ENCODE measurements at regions of chr20 and their contacts with region 1.

Region 1: DNA sequence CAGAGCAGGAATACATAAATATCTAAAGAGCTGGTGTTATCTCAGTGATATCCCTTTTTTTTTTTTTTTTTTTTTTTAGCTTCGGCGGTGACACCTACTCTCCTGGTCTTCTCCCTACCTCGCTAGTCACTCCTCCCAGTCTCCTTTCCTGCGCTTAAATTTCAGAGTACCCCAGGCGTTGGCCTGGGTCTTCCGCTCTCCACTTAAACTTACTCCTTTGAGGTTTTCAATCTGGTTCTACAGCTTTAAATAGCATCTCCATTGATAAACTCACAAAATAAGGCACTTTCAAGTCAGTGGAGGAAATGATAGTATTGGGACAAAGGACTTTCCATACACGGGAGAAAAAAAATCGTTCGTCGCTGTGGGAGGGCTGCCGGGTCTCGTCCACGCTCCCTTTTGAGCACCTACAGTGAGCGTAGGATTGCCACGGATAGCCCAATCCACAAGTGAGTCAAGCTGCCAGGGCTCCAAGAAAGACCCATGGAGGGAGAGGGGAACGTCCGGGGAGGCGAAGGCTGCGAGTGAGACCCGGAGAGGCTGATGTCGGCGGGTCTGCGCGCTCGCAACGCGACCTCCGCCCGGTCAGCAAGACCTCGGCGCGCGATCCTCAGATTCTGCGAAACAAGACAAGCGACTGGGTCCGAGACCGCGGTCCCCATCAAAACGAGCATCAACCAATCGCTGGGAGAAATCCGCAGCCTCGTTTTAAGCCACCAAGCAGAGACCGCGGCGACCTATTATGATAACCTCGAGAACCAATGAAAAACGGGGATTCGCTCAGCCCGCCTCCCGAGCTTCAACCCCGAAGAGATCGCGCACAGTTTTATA is 672 bp upstream of the SRSF6 start:
- DNase-seq: peak; percentile 74
- ATAC-seq: peak; percentile 87
- H3K4me3 ChIP-seq: peak overlapping the region; percentile 71
- H3K27ac ChIP-seq: peak overlapping the region; percentile 99
- H3K4me1 ChIP-seq: peaks cover 3% of the 10 kb centered on the region; the same call in 1 of the 2 replicates
- H3K27me3 ChIP-seq: no peaks in the 10 kb centered on the region
- CTCF ChIP-seq: no peak
- EP300 ChIP-seq: no peak
- POLR2A ChIP-seq: no peak
- RAD21 ChIP-seq: no peak

Region 2: DNA sequence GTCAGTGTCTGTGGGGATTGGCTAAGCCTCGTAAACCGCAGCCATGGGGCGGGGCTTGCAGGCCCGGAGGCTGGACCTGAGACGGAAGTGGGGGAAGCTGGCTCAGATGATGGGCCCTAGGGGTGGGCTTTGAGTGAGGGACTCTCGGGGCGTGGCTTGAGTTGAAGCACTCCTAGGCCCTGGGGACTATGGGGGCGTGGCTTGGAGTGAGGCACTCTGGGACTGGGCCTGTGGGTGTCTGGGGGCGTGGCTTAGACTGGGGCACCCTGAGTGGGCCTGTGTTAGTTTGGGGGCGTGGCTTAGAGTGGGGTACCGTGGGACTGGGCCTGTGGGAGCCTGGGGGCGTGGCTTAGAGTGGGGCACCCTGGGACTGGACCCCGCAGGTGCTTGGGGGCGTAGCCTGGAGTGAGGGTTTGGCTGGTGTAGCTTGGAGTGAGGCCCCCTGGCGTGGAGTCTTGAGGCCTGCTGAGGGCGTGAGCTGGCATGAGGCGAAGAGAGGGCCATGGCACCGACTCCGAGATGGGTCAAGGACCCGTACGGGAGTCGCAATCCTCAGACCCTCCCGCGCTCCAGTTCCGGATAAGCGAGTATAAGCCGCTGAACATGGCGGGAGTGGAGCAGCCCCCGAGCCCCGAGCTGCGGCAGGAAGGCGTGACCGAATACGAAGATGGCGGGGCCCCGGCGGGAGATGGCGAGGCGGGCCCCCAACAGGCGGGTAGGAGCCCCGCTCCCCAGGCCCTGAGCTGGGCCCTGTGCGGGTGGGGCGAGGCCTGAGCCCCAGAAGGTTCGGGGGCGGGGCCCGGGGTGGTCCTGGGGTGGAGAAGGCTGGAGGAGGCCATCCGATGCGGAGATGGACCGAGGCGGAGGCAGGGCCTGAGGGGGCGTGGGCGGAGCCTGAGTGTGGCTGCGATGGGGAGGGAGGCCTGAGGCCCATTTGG is 57.3 kb after region 1 on chr20:
- CTCF ChIA-PET with region 1: interaction called, 3 read pairs
- POLR2A ChIA-PET with region 1: interaction called, 6 read pairs
- RAD21 ChIA-PET with region 1: interaction called, 8 read pairs
- SMC1A ChIA-PET with region 1: interaction called, 3 read pairs
- in situ Hi-C with region 1: no loop called
- intact Hi-C with region 1: loop called (anchors 5 kb)
- DNase-seq: peak; percentile 92
- ATAC-seq: peak; percentile 92
- H3K4me3 ChIP-seq: peak overlapping the region; percentile 73
- H3K27ac ChIP-seq: peak overlapping the region; percentile 72
- H3K4me1 ChIP-seq: peaks cover 3% of the 10 kb centered on the region; the same call in 1 of the 2 replicates
- H3K27me3 ChIP-seq: no peaks in the 10 kb centered on the region
- CTCF ChIP-seq: peak; percentile 27 to 46 (median 42); a peak in 4 of 6 replicates
- EP300 ChIP-seq: no peak
- POLR2A ChIP-seq: peak; percentile 82
- RAD21 ChIP-seq: 0 out of 2 replicates have a peak, but pooled peaks have one; percentile 8

Region 3: GRCh38 chr20:43583982-43584432 is 127.0 kb after region 1 on chr20:
- CTCF ChIA-PET with region 1: no interaction called
- POLR2A ChIA-PET with region 1: interaction called, 11 read pairs
- RAD21 ChIA-PET with region 1: no interaction called
- SMC1A ChIA-PET with region 1: no interaction called
- in situ Hi-C with region 1: no loop called
- intact Hi-C with region 1: no loop called
- DNase-seq: no peak
- ATAC-seq: no peak
- H3K4me3 ChIP-seq: no peak overlapping the region
- H3K27ac ChIP-seq: no peak overlapping the region
- H3K4me1 ChIP-seq: no peaks in the 10 kb centered on the region
- H3K27me3 ChIP-seq: no peaks in the 10 kb centered on the region
- CTCF ChIP-seq: no peak
- EP300 ChIP-seq: no peak
- POLR2A ChIP-seq: no peak
- RAD21 ChIP-seq: no peak

Region 4: DNA sequence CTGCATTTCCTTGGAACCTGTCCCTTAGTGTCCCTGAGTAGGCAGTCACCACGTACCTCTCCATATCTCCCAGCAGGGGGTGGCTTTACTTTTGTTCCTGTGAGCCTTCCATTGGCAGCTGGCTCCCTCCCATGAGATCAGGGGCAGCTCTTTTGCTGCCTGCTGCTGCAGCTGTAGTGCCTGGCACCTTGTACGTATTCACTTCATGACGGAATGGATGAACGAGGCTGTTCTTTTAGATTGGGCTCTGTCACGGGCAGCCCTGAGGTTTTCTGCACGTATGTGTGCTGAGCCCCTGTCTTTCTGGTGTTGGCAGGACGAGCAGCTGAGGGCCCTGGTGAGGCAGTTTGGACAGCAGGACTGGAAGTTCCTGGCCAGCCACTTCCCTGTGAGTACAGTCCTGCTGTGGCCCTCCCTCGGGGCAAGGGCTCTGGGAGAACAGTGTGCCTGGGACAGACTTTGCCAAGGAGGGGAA is 224.5 kb after region 1 on chr20:
- CTCF ChIA-PET with region 1: interaction called, 3 read pairs
- POLR2A ChIA-PET with region 1: interaction called, 7 read pairs
- RAD21 ChIA-PET with region 1: no interaction called
- SMC1A ChIA-PET with region 1: no interaction called
- in situ Hi-C with region 1: loop called (anchors 5 kb)
- intact Hi-C with region 1: loop called (anchors 5 kb)
- DNase-seq: peak; percentile 21
- ATAC-seq: peak; percentile 70
- H3K4me3 ChIP-seq: peak overlapping the region; percentile 68
- H3K27ac ChIP-seq: peak overlapping the region; percentile 89
- H3K4me1 ChIP-seq: peaks cover 32% of the 10 kb centered on the region
- H3K27me3 ChIP-seq: no peaks in the 10 kb centered on the region
- CTCF ChIP-seq: peak; percentile 21 to 42 (median 40); a peak in 5 of 6 replicates
- EP300 ChIP-seq: no peak
- POLR2A ChIP-seq: 0 out of 2 replicates have a peak, but pooled peaks have one; percentile 23
- RAD21 ChIP-seq: 0 out of 2 replicates have a peak, but pooled peaks have one; percentile 14

Region 5: GRCh38 chr20:44210422-44211176 is 753.6 kb after region 1 on chr20 and contains the start of gene OSER1:
- CTCF ChIA-PET with region 1: interaction called, 3 read pairs
- POLR2A ChIA-PET with region 1: no interaction called
- RAD21 ChIA-PET with region 1: no interaction called
- SMC1A ChIA-PET with region 1: no interaction called
- in situ Hi-C with region 1: no loop called
- intact Hi-C with region 1: loop called (anchors 2 kb)
- DNase-seq: peak; percentile 88
- ATAC-seq: peak; percentile 88
- H3K4me3 ChIP-seq: peak within 1 kb of the TSS; percentile 98
- H3K27ac ChIP-seq: peak within 1 kb of the TSS; percentile 89
- H3K4me1 ChIP-seq: peaks cover 4% of the 10 kb centered on the region; the same call in 1 of the 2 replicates
- H3K27me3 ChIP-seq: no peaks in the 10 kb centered on the region
- CTCF ChIP-seq: no peak
- EP300 ChIP-seq: 0 out of 4 replicates have a peak, but pooled peaks have one; percentile 27 to 44
- POLR2A ChIP-seq: peak; percentile 80
- RAD21 ChIP-seq: no peak
- polyA plus RNA-seq, gene OSER1: 50.3 to 63.8 TPM

Measured in GM12878 (cell line).